ENCODE measurements at regions of chr16 and their contacts with region 1.

Region 1: GRCh38 chr16:65349626-65350025 is 227.8 kb upstream of the CDH11 start:
- DNase-seq: no peak
- ATAC-seq: no peak

Region 2: GRCh38 chr16:65172356-65172755 is 177.3 kb before region 1 on chr16:
- intact Hi-C with region 1: no loop called
- DNase-seq: no peak
- ATAC-seq: no peak

Region 3: DNA sequence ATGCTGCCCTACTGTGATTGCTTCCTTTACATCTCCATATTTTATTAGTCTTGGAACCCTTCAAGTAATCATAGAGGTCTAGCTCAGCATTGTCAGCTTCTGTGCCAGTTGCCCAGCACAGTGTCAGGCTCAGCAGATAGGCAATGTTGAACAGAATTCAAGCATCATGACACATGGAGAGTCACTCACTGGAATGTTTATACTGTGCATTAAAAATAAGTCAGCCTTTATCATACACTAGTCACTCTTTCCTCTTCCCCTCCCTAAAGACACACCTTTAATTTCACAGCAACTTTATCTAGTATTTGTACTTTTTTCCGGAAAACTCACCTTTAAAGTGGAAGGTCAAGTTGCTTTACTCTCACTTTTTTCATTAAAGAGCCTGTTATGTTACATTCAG is 26.0 kb after region 1 on chr16:
- intact Hi-C with region 1: loop called in 1 of 2 experiments (anchors 2 kb)
- DNase-seq: no peak
- ATAC-seq: no peak

Region 4: GRCh38 chr16:65658349-65658748 is 308.7 kb after region 1 on chr16:
- intact Hi-C with region 1: no loop called
- DNase-seq: peak; percentile 35
- ATAC-seq: peak in 1 of 2 donors; percentile 88